ENCODE measurements at regions of chr14 and their contacts with region 1.

Region 1: DNA sequence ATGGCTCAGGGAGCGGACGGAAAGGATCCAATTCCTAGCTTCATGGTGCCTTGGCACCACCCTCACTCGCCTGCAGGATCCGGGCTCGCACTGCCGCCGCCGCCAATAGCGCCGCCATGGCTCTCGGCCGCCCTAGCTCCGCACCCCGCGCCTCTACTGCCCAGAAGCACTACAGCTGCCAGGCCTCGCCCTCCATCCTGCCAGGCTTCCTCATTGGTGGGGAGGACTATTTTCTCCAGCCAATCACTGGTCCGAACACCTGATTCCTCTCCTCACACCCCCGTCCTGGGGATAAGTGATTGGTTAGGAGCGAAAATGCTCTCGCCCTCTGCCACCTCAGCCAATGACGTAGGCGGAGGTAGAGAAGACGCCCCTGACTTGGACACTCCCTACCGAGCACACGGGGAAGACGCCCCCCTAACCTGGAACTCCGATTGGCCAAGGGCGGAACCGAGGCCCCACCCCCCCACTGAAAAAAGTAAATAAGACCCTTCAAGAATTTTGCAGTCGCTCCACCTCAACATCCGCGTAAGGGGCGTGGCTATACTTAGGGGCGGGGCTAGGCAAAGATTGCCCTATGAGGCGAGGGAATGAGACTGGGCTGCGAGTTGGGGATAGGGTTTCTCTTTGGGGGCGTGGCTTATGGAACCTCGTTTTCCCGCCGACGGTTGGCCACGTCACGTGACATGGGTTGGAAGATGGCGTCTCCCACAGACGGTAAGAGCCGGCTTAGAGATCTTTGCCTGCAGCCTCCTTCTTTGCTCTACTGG is at the starts of genes ALDH6A1 and LIN52:
- DNase-seq: peak; percentile 100
- H3K4me3 ChIP-seq: peak within 1 kb of the TSS; percentile 68 to 96
- H3K27ac ChIP-seq: peak within 1 kb of the TSS; percentile 81 to 92
- H3K4me1 ChIP-seq: peaks cover 0 to 16% of the 10 kb centered on the region in 2 donors
- H3K27me3 ChIP-seq: no peaks in the 10 kb centered on the region
- CTCF ChIP-seq: no peak
- total RNA-seq, gene ALDH6A1: 4.9 TPM
- total RNA-seq, gene LIN52: 1.1 TPM

Region 2: DNA sequence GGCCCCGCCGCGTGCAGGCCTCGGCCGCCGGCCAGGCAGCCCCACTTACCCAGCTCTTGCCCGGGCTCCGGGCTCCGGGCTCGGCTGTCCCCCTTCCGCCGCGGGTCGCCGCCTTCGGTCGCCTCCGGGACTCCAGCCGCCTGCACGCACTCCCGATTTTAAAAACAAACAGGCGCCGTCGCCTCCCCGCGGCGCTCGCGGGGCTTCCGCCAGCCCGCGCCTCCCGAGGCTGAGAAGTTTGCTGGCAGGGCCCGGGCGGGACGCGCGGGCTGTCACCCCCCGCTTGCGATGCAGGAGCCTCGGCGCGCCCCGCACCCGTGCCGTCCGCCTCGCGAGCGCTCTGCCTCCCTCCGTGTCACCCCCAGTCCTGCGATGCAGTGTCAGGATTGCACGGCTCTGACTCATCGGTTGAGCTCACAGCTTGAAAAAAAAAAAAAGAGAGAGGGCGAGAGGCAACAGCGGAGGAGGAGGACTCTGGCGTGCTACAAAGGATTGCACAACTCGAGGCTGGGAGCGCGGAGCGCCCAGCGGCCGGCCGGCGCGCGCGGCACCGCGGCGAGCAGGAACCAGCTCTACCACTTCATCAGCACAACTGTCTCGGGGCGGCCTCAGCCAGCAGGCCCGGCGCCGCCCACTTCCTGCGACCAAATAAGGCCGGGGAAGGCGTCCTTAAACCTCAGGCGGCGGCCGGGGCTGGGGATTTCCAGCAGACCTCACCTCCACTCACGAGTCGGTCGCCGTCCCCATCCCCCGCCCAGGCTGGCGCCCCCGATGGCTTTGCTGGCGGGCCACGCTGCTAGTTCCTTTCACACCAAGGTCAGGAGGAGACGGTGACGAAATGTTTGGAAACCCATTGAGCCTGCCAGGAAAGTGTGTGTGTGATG is 324.5 kb before region 1 on chr14:
- intact Hi-C with region 1: loop called (anchors 10 kb)
- DNase-seq: peak; percentile 96 to 99
- H3K4me3 ChIP-seq: peak overlapping the region; percentile 83 to 92
- H3K27ac ChIP-seq: peak overlapping the region; percentile 98 to 99
- H3K4me1 ChIP-seq: peaks cover 34 to 82% of the 10 kb centered on the region in 2 donors
- H3K27me3 ChIP-seq: no peaks in the 10 kb centered on the region
- CTCF ChIP-seq: peak in 1 of 3 experiments; percentile 58

Region 3: DNA sequence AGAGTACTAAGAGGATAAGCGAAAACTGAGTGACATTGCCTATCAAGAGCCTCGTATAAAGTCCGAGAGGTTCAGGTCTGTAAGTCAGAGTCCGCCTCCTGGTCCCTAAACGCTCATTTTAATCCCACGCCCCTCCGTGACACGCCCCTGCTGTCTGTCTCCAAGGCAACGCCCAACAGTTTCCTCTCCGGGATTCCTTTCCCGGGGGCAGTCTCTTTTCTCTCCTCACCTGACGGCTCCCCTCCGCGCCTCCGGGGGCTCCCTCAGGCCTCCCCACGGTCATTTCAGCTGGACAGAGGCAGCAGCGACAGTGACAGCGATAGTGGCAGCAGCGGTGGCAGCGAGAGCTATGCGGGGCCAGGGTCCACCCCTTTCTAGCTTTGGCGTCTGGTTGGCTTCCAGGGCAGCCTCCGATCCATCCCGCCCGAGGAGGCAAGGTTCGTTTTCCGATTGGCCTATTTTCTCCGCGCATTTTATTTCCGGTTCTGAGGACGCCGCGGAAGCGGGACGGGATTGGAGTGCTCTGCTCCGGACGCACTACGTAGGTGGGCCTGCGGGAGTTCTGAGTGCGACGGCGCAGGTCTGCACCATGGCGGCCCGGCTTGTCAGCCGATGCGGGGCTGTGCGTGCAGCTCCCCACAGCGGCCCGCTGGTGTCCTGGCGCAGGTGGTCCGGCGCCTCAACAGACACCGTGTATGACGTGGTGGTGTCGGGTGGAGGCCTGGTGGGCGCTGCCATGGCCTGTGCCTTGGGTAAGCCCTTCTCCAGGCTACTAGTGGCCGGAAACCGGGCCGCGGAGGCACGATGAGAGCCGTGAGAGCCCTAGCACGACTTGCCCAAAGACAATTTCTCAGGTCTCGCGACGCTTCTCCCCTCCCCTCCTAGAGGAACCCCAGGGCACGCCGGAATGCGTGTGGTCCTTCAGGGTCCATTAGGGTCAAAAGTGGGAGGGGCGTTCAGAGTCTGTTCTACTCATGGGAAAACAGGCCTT is 134.4 kb before region 1 on chr14 and contains the starts of genes COQ6 and FAM161B:
- intact Hi-C with region 1: loop called (anchors 1 kb)
- DNase-seq: peak; percentile 79 to 97
- H3K4me3 ChIP-seq: peak within 1 kb of the TSS; percentile 78 to 85
- H3K27ac ChIP-seq: peak within 1 kb of the TSS; percentile 88 to 95
- H3K4me1 ChIP-seq: peaks cover 0 to 12% of the 10 kb centered on the region in 2 donors
- H3K27me3 ChIP-seq: no peaks in the 10 kb centered on the region
- CTCF ChIP-seq: peak in 2 of 3 experiments; percentile 7 to 19
- total RNA-seq, gene COQ6: 6.7 TPM
- total RNA-seq, gene FAM161B: 0.53 TPM

Region 4: GRCh38 chr14:74018586-74019407 is 65.7 kb before region 1 on chr14 and contains the starts of genes BBOF1 and ENTPD5:
- intact Hi-C with region 1: loop called (anchors 1 kb)
- DNase-seq: peak; percentile 31 to 92
- H3K4me3 ChIP-seq: peak within 1 kb of the TSS; percentile 82 to 97
- H3K27ac ChIP-seq: peak within 1 kb of the TSS; percentile 95 to 99
- H3K4me1 ChIP-seq: peaks cover 2 to 7% of the 10 kb centered on the region in 2 donors
- H3K27me3 ChIP-seq: no peaks in the 10 kb centered on the region
- CTCF ChIP-seq: no peak
- total RNA-seq, gene BBOF1: 16.2 TPM
- total RNA-seq, gene ENTPD5: 2.6 TPM

Region 5: DNA sequence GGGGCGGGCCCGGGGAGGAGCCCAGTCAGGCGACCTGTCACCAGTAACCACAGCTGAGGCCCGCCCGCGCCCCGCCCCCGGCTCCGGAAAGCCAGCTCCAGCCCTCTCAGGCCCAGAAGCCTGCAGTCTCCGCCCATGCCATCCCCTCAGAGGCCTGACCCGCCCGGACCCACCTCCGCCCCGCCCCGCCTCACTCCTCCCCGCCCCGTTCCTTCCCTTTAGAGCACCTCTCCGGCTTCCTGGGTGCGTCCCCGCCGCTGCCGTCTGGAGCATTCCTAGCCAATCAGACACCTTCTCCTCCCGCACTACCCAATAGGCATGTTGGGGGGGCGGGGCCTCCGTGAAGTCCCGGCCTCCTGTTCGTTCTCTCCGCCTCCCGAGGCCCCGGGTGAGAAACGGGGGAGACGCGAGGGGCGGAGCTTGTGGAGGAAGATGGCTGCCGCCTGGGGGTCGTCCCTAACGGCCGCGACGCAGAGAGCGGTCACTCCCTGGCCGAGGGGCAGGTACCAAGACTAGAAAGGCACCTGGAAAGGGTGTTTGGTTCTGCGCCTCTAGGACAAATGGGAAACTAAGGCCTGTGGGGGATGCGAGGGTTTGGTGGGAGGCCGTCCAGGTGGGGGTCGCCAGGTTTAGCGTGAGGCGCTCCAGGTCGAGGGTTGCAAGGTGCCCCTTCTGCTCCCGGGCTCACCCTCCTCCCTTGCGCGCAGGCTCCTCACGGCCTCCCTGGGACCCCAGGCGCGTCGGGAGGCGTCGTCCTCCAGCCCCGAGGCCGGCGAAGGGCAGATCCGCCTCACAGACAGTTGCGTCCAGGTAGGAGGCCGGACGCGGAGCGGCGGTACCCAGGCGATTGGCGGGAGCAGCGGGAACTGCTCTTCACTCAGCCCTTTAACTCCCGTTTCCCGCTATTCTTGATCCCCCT is 409.1 kb after region 1 on chr14 and contains the start of gene ISCA2:
- intact Hi-C with region 1: loop called (anchors 10 kb)
- DNase-seq: peak; percentile 99 to 100
- H3K4me3 ChIP-seq: peak within 1 kb of the TSS; percentile 91 to 93
- H3K27ac ChIP-seq: peak within 1 kb of the TSS; percentile 94 to 95
- H3K4me1 ChIP-seq: peaks cover 0 to 7% of the 10 kb centered on the region in 2 donors
- H3K27me3 ChIP-seq: no peaks in the 10 kb centered on the region
- CTCF ChIP-seq: no peak
- total RNA-seq, gene ISCA2: 10.0 TPM